ENCODE measurements at regions of chr3 and their contacts with region 1.

Region 1: DNA sequence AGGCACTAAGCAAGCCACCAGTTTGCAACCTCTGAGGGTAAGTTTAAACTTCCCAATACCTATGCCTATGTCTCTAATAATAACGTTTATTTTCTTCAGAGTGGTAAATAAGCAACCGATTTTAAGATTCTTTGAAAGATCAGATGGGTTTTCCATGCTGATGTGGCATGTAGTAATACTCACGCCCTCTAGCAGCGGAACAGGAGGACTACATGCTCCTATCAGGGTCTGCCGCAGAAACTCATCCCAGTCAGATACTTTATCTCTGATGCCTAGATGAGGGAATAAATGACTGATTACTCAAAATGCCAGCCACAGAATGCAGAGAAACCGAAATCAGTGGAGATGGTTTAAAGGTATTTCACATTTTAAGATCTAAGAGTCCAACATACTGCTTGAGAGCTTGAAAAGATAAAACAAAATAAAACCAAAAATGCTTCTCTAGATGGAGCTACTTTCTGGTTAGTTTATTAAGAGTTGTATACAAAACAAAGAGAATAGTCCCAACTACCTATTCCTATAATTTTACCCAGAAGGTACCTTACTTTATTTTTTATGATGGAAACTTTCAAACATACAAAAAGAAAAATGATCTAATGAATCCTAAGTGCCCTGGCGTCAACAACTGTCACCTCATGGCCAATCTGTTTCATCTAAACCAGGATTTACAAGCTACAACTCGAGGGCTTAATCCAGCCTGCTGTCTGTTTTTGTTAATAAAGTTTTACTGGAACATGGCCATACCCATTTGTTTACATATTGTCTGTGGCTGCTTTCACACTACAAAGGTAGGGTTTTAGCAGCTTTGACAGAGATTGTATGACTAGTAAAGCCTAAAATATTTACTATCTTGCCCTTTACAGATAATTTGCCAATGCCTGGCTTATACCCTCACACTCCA is 37.5 kb upstream of the STIMATE start:
- DNase-seq: peak in 1 of 2 donors; percentile 34
- H3K4me3 ChIP-seq: no peak overlapping the region
- CTCF ChIP-seq: no peak
- POLR2A ChIP-seq: no peak

Region 2: GRCh38 chr3:52197842-52198668 is 736.8 kb before region 1 on chr3 and contains the start of gene ALAS1:
- intact Hi-C with region 1: loop called (anchors 5 kb)
- DNase-seq: peak; percentile 85 to 98
- H3K4me3 ChIP-seq: peak within 1 kb of the TSS; percentile 88
- CTCF ChIP-seq: no peak
- POLR2A ChIP-seq: peak in 1 of 2 donors; percentile 41
- total RNA-seq, gene ALAS1: 17.5 to 43.1 (median 32.2) TPM

Region 3: DNA sequence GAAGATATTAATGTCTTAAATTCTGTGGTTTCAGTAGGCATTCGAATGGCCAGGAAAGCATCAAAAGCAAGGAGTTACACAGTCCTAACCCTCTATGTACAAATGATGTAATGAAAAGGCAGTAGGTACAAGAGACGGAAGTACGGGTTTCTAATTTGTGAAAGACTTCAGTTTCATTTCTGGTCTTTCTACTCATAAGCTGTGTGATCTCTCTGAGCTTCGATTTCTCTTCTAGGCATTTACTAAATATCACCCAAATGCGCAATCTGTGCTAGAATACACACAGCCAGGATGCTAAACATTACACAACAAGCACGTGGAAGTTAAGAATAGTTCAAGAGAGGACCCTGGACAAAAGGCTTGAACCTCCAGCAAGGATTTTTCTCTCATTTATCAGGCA is 19.6 kb before region 1 on chr3:
- intact Hi-C with region 1: loop called (anchors 1 kb)
- DNase-seq: no peak
- H3K4me3 ChIP-seq: no peak overlapping the region
- CTCF ChIP-seq: no peak
- POLR2A ChIP-seq: no peak

Measured in lower leg skin (tissue), 4 donors.